Activated CD4-positive, alpha-beta memory T cell treated with anti-CD3 and anti-CD28 coated beads for 36 hours (primary cell): ENCODE measurements at regions of chr20 and their contacts with region 1.

Region 1: GRCh38 chr20:16729565-16730456 is at the start of gene SNRPB2:
- DNase-seq: peak; percentile 95
- H3K4me3 Mint-ChIP-seq: peak within 1 kb of the TSS; percentile 100
- H3K27ac Mint-ChIP-seq: peak within 1 kb of the TSS; percentile 99
- H3K4me1 Mint-ChIP-seq: peaks cover 48% of the 10 kb centered on the region
- H3K27me3 Mint-ChIP-seq: peaks cover 13% of the 10 kb centered on the region
- total RNA-seq, gene SNRPB2: 109 to 110 TPM

Region 2: GRCh38 chr20:16573001-16573965 is 156.5 kb before region 1 on chr20 and contains the start of gene KIF16B:
- CTCF ChIA-PET with region 1: no interaction called
- POLR2A ChIA-PET with region 1: interaction called, 6 read pairs
- intact Hi-C with region 1: loop called (anchors 1 kb)
- DNase-seq: peak; percentile 92
- H3K4me3 Mint-ChIP-seq: peak within 1 kb of the TSS; percentile 87
- H3K27ac Mint-ChIP-seq: peak within 1 kb of the TSS; percentile 75
- H3K4me1 Mint-ChIP-seq: peaks cover 45% of the 10 kb centered on the region
- H3K27me3 Mint-ChIP-seq: no peaks in the 10 kb centered on the region
- total RNA-seq, gene KIF16B: 7.7 to 7.9 TPM

Region 3: GRCh38 chr20:16709017-16709416 is 20.8 kb before region 1 on chr20:
- CTCF ChIA-PET with region 1: no interaction called
- POLR2A ChIA-PET with region 1: no interaction called
- intact Hi-C with region 1: loop called (anchors 1 kb)
- DNase-seq: no peak
- H3K4me3 Mint-ChIP-seq: no peak overlapping the region
- H3K27ac Mint-ChIP-seq: no peak overlapping the region
- H3K4me1 Mint-ChIP-seq: peaks cover 33% of the 10 kb centered on the region
- H3K27me3 Mint-ChIP-seq: no peaks in the 10 kb centered on the region

Region 4: DNA sequence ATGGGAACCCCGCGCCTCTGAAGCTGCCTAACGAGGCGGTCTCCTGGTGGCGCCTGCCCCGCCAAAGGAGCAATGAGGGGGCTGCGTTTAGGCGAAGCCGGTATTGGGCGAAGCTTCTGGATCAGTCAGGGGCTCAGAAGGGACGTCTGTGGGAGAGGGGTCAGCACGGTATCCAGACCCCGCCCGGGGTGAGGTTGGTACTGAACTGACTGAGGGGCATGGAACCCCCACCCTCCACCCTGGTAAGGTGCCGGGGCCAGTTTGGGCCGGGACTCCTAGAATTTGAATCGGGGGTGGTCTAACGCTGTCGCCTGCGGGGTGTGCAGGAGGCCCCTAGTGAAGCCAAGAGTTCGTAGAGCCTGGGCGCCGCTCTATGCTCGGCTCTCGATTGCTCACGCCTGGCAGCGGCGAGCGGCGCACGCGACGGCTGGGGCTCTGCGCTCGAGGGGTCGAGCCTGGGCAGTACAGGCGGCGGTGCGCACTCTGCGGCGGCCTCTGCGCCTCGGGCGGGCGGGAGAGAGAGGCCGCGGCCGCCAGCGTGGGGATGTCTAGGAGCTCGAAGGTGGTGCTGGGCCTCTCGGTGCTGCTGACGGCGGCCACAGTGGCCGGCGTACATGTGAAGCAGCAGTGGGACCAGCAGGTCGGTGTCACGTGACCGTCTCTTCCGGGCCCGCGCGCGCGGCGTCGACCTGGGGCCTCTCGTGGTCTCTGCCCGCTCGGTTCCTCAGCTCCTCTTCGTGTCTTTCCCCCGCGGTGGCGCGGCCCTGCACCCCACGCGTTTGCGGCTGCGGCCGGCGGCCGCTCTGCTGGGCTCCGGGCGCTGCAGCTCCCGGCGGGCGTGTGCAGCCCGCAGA is 1407.8 kb after region 1 on chr20 and contains the starts of genes KAT14 and PET117:
- CTCF ChIA-PET with region 1: no interaction called
- POLR2A ChIA-PET with region 1: no interaction called
- intact Hi-C with region 1: loop called (anchors 10 kb)
- DNase-seq: peak; percentile 93
- H3K4me3 Mint-ChIP-seq: peak within 1 kb of the TSS; percentile 65
- H3K27ac Mint-ChIP-seq: peak within 1 kb of the TSS; percentile 76
- H3K4me1 Mint-ChIP-seq: peaks cover 29% of the 10 kb centered on the region
- H3K27me3 Mint-ChIP-seq: no peaks in the 10 kb centered on the region
- total RNA-seq, gene KAT14: 14.2 to 14.4 TPM
- total RNA-seq, gene PET117: 15.2 to 15.9 TPM